ENCODE measurements at regions of chr3 and their contacts with region 1.

Region 1: GRCh38 chr3:173733029-173733652 is 335.6 kb downstream of the NLGN1 start:
- DNase-seq: no peak
- H3K4me3 ChIP-seq: no peak overlapping the region
- H3K27ac ChIP-seq: no peak overlapping the region
- H3K4me1 ChIP-seq: peaks cover 7% of the 10 kb centered on the region
- H3K27me3 ChIP-seq: no peaks in the 10 kb centered on the region
- CTCF ChIP-seq: peak; percentile 58 to 68

Region 2: DNA sequence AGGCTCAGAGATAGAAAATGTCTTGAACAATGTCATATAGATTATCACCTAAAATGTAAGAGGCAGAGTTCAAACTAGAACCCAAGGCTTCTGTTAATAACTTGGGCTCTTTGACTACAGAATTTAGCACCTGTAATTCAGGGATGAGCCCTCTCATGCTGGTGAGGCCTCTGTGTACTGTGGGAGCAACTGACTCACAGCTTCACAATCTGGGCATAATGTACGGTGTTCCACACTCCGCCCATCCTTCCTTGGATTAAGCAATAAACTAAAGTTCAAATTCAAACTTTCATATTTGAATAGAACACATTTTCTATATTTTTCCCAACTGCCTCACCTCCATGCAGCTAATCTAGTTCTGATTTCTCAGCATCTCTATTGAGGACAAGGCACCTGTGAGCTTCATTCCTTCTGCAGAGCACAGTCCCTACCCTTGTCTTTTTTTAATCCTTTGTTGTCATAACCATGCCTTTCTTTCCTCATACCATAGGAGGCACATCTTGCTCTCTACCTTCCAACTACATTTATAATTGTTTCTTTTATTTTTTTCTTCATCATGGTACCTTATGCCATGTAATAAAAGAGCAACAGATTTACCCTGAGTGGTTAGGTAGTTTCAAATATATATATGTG is 56.5 kb after region 1 on chr3:
- CTCF ChIA-PET with region 1: interaction called, 23 read pairs
- dilution Hi-C with region 1: no loop called
- in situ Hi-C with region 1: no loop called
- intact Hi-C with region 1: no loop called
- DNase-seq: peak; percentile 45
- H3K4me3 ChIP-seq: no peak overlapping the region
- H3K27ac ChIP-seq: no peak overlapping the region
- H3K4me1 ChIP-seq: no peaks in the 10 kb centered on the region
- H3K27me3 ChIP-seq: no peaks in the 10 kb centered on the region
- CTCF ChIP-seq: no peak

Region 3: GRCh38 chr3:174002543-174002942 is 269.4 kb after region 1 on chr3:
- CTCF ChIA-PET with region 1: no interaction called
- dilution Hi-C with region 1: no loop called
- in situ Hi-C with region 1: no loop called
- intact Hi-C with region 1: loop called (anchors 2 kb)
- DNase-seq: no peak
- H3K4me3 ChIP-seq: no peak overlapping the region
- H3K27ac ChIP-seq: no peak overlapping the region
- H3K4me1 ChIP-seq: no peaks in the 10 kb centered on the region
- H3K27me3 ChIP-seq: peaks cover 3% of the 10 kb centered on the region
- CTCF ChIP-seq: peak in 1 of 2 donors; percentile 25

Measured in mammary epithelial cell (primary cell).